Dorsolateral prefrontal cortex (tissue), 120 donors: ENCODE measurements at regions of chr21 and their contacts with region 1.

Region 1: DNA sequence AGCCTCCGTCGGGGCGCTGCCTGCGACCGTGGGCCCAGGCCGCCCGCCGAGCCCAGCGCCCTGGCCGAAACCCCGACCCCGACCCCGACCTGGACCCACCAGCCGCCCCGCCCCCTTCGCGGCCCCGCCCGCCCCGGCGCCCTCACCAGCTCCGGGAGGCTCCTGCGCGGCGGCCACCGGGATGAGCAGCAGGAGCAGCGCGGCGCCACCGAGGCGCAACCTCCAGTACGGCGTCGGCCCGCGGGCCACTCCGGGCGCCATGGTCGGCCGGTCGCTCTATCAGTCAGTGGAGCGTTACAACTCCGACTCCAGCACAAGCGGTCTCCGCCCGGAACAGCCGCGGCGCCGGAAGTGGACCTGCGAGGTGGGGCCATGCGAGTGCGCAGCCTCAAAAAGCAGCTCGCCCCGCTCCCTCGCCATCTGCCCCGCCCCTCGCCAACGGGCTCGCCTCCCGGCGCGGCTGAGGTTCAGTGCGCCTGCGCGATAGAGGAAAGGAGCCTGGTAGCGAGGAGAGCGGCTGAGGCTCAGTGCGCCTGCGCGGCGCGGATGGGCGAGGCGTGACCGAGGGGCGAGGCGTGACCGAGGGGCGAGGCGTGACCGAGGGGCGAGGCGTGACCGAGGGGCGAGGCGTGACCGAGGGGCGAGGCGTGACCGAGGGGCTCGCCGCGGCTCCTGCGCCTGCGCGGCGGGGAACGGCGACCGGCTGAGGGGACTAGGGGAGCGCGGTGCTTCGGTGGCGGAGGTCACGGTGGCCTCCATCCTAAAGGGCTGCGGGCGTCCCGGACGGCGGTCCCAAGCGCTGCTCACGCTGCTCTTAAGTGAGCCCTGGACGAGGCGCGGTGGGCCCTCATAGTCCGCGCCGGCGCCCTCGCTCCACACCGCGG is at the start of gene PTTG1IP:
- DNase-seq: peak; percentile 90 to 97 (median 96)
- H3K4me3 ChIP-seq: peak within 1 kb of the TSS; percentile 59 to 96 (median 85)
- H3K27ac ChIP-seq: peak within 1 kb of the TSS; percentile 4 to 94 (median 86)
- H3K27me3 ChIP-seq: no peaks in the 10 kb centered on the region
- CTCF ChIP-seq: peak in 16 of 56 donors; percentile 1 to 49 (median 25)
- total RNA-seq, gene PTTG1IP: 59.2 to 243 (median 103) TPM

Region 2: GRCh38 chr21:44347911-44348753 is 525.5 kb before region 1 on chr21:
- intact Hi-C with region 1: loop called in 1 of 2 experiments (anchors 10 kb)
- DNase-seq: no peak
- H3K4me3 ChIP-seq: no peak overlapping the region
- H3K27ac ChIP-seq: no peak overlapping the region
- H3K27me3 ChIP-seq: peaks cover 0 to 35% (median 9%) of the 10 kb centered on the region in 45 donors
- CTCF ChIP-seq: no peak

Region 3: GRCh38 chr21:44801468-44802395 is 71.9 kb before region 1 on chr21 and contains the start of gene UBE2G2:
- intact Hi-C with region 1: loop called (anchors 5 kb)
- DNase-seq: peak; percentile 53 to 93 (median 72)
- H3K4me3 ChIP-seq: peak within 1 kb of the TSS; percentile 65 to 100 (median 92)
- H3K27ac ChIP-seq: peak within 1 kb of the TSS in 37 of 59 donors; percentile 1 to 84 (median 59)
- H3K27me3 ChIP-seq: no peaks in the 10 kb centered on the region
- CTCF ChIP-seq: peak in 19 of 56 donors; percentile 2 to 49 (median 17)
- total RNA-seq, gene UBE2G2: 62.2 to 111 (median 84.5) TPM

Region 4: DNA sequence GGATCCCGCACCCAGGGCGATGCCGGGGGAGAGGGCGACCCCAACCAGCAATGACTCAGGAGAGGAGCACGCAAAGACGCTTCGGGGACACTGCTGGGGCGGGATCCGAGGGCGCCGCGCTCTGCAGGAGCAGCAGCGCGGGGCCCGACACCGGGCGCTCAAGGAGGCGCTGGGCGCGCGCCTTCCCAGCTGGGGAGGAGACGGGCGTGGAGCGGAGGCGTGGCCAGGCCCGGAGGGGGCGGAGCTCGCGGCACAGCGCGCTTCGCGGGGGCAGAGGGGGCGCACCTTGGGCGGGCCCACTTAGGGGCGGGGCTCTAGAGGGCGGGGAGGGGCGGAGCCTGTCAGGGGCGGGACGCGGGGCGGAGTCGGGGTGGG is 56.1 kb before region 1 on chr21:
- intact Hi-C with region 1: loop called (anchors 5 kb)
- DNase-seq: peak; percentile 74 to 95 (median 86)
- H3K4me3 ChIP-seq: peak overlapping the region; percentile 43 to 88 (median 79)
- H3K27ac ChIP-seq: peak overlapping the region in 51 of 59 donors; percentile 7 to 97 (median 86)
- H3K27me3 ChIP-seq: no peaks in the 10 kb centered on the region
- CTCF ChIP-seq: peak in 5 of 56 donors; percentile 4 to 18 (median 8)

Region 5: GRCh38 chr21:44939532-44940115 is 66.0 kb after region 1 on chr21 and contains the start of gene SLX9:
- intact Hi-C with region 1: loop called (anchors 5 to 10 kb)
- DNase-seq: peak in 9 of 10 donors; percentile 51 to 87 (median 67)
- H3K4me3 ChIP-seq: peak within 1 kb of the TSS; percentile 62 to 99 (median 89)
- H3K27ac ChIP-seq: peak within 1 kb of the TSS in 42 of 59 donors; percentile 1 to 90 (median 56)
- H3K27me3 ChIP-seq: no peaks in the 10 kb centered on the region
- CTCF ChIP-seq: peak in 33 of 56 donors; percentile 6 to 57 (median 23)
- total RNA-seq, gene SLX9: 13.4 to 35.4 (median 23.4) TPM

Region 6: DNA sequence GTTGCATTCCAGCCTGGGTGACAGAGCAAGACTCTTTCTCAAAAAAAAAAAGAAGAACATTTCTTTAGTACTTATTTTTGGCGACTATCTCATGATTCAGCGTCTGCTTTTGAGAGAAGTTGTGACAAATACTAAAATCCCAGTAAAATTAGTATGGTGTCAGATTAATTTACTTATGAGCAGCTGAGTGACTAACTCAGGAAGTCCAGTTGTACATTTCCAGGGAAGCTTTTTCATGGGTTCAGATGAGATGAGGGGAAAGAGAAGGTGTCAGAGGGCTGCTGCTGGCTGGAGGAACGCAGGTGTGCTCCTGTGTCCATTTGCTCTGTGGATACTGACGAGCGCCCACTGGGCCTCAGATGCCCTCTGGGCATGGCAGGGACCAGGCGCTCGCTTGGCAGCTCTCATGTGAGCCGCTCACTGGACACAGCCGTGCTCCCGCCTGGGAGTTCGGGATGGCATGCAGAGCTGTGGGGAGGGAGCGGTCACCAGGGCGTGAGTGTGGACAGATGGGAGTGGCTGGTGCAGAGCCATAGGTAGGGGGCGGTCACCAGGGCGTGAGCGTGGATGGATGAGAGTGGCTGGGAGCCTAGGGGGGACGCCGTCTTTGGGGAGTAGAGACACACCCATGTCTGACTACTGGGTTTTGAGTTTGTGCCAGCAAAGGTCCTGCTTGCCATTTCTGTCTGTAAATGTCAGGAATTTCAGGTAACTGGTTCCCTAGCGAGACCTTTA is 255.8 kb after region 1 on chr21:
- intact Hi-C with region 1: loop called in 1 of 2 experiments (anchors 10 kb)
- DNase-seq: peak in 1 of 10 donors; percentile 50
- H3K4me3 ChIP-seq: no peak overlapping the region
- H3K27ac ChIP-seq: peak overlapping the region in 35 of 59 donors; percentile 4 to 76 (median 44)
- H3K27me3 ChIP-seq: no peaks in the 10 kb centered on the region
- CTCF ChIP-seq: no peak